ENCODE measurements at regions of chr10 and their contacts with region 1.

Region 1: DNA sequence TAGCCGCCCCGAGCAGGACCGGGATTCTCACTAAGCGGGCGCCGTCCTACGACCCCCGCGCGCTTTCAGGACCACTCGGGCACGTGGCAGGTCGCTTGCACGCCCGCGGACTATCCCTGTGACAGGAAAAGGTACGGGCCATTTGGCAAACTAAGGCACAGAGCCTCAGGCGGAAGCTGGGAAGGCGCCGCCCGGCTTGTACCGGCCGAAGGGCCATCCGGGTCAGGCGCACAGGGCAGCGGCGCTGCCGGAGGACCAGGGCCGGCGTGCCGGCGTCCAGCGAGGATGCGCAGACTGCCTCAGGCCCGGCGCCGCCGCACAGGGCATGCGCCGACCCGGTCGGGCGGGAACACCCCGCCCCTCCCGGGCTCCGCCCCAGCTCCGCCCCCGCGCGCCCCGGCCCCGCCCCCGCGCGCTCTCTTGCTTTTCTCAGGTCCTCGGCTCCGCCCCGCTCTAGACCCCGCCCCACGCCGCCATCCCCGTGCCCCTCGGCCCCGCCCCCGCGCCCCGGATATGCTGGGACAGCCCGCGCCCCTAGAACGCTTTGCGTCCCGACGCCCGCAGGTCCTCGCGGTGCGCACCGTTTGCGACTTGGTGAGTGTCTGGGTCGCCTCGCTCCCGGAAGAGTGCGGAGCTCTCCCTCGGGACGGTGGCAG is at the start of gene MGMT:
- DNase-seq: peak; percentile 97
- ATAC-seq: peak; percentile 99
- H3K4me3 Mint-ChIP-seq: peak within 1 kb of the TSS; percentile 81
- H3K27ac Mint-ChIP-seq: peak within 1 kb of the TSS; percentile 82
- H3K4me1 Mint-ChIP-seq: peaks cover 12% of the 10 kb centered on the region
- H3K27me3 Mint-ChIP-seq: no peaks in the 10 kb centered on the region
- CTCF ChIP-seq: no peak
- total RNA-seq, gene MGMT: 22.5 and 25.8 TPM in 2 replicates

Region 2: GRCh38 chr10:128125944-128126764 is 1340.7 kb before region 1 on chr10 and contains the start of gene MKI67:
- CTCF ChIA-PET with region 1: no interaction called
- POLR2A ChIA-PET with region 1: no interaction called
- intact Hi-C with region 1: loop called (anchors 5 kb)
- DNase-seq: peak; percentile 68
- ATAC-seq: peak; percentile 94
- H3K4me3 Mint-ChIP-seq: peak within 1 kb of the TSS; percentile 86
- H3K27ac Mint-ChIP-seq: peak within 1 kb of the TSS; percentile 87
- H3K4me1 Mint-ChIP-seq: peaks cover 18% of the 10 kb centered on the region
- H3K27me3 Mint-ChIP-seq: peaks cover 22% of the 10 kb centered on the region
- CTCF ChIP-seq: no peak
- total RNA-seq, gene MKI67: 2.2 and 3.5 TPM in 2 replicates

Region 3: GRCh38 chr10:129501652-129502436 is 35.0 kb after region 1 on chr10:
- CTCF ChIA-PET with region 1: no interaction called
- POLR2A ChIA-PET with region 1: no interaction called
- intact Hi-C with region 1: loop called (anchors 5 kb)
- DNase-seq: no peak
- ATAC-seq: peak; percentile 97
- H3K4me3 Mint-ChIP-seq: no peak overlapping the region
- H3K27ac Mint-ChIP-seq: no peak overlapping the region
- H3K4me1 Mint-ChIP-seq: peaks cover 30% of the 10 kb centered on the region
- H3K27me3 Mint-ChIP-seq: no peaks in the 10 kb centered on the region
- CTCF ChIP-seq: no peak

Region 4: DNA sequence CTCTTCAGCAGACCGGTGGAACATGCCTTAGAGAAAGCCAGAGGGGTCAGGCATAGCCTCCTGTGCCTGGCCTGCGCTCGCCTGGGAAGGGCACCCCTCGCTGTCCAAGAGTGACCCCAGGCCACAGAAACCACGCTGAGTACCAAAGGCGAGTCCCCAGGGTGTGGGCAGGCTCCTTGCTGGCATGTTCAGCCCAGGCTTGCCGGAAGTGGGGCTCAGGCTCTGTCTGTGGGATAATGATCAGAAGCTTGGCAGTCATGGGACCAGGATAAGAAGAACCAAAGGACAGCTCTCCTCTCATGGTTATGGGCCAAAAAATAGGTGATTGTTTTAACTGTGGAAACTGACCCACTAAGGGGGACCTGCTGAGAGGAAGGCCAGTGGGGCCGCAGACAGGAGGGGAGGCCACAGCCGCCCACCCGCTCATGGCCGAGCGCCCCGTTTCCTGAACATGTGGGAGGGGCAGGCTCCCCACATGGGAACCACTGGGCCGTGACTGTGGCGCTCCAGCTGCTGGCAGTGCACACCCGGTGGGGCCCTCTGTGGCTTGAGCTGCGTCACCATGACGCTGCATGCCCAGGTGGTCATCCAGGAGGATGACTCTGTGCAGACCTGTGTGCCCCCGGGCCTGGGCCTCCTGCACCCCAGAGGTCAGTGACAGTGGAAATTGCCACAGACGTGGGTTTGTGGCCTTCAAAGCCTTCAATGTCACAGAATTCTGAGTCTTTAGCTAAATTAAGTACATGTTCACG is 85.1 kb after region 1 on chr10:
- CTCF ChIA-PET with region 1: no interaction called
- POLR2A ChIA-PET with region 1: no interaction called
- intact Hi-C with region 1: no loop called
- DNase-seq: peak; percentile 30
- ATAC-seq: peak; percentile 75
- H3K4me3 Mint-ChIP-seq: peak overlapping the region; percentile 6
- H3K27ac Mint-ChIP-seq: peak overlapping the region; percentile 38
- H3K4me1 Mint-ChIP-seq: peaks cover 19% of the 10 kb centered on the region
- H3K27me3 Mint-ChIP-seq: no peaks in the 10 kb centered on the region
- CTCF ChIP-seq: no peak

Region 5: GRCh38 chr10:129605986-129606518 is 139.2 kb after region 1 on chr10:
- CTCF ChIA-PET with region 1: no interaction called
- POLR2A ChIA-PET with region 1: interaction called, 8 read pairs
- intact Hi-C with region 1: loop called (anchors 2 kb)
- DNase-seq: no peak
- ATAC-seq: peak; percentile 74
- H3K4me3 Mint-ChIP-seq: peak overlapping the region; percentile 81
- H3K27ac Mint-ChIP-seq: peak overlapping the region; percentile 85
- H3K4me1 Mint-ChIP-seq: peaks cover 47% of the 10 kb centered on the region
- H3K27me3 Mint-ChIP-seq: no peaks in the 10 kb centered on the region
- CTCF ChIP-seq: no peak

Region 6: DNA sequence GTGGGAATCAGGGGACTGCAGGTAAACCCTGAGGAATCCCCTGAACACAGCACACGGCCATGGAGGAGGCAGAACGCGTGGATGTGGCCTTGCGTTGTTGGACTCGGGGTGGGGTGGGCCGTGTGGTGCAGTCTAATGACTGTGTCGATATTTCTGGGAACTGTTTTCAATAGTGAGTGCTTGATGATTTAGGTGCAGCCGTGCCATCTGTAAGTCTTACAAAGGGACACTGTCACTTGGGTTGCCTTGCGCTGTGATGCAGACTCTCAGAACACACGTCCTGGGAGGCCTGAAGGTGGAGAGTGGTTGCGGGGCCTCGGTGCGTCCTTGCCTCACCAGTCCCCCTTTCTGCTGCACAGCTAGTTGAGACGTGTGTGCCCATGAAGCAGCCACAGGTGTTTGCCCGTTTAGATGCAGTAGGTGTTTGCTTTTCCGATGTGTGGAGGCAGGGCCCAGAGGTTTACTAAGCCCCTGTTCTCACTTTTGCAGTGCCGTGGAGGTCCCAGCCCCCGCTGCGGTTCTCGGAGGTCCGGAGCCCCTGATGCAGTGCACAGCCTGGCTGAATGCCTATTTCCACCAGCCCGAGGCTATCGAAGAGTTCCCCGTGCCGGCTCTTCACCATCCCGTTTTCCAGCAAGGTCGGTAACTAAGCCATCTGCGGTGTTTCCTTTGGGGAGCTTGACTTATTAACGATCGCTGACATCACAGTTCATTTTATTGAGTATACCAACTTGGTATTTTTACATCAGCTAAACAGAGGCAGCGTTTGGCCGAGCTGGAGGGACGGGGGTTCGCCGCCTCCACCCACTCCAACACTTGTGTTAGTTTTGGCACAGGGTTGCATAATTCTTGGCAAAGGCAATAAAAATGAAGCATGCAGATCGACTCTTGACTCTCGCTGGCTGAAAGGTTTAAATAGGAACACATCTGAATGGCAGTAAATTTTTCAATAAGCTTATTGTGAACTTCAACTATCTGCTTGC is 240.9 kb after region 1 on chr10:
- CTCF ChIA-PET with region 1: no interaction called
- POLR2A ChIA-PET with region 1: no interaction called
- intact Hi-C with region 1: no loop called
- DNase-seq: no peak
- ATAC-seq: no peak
- H3K4me3 Mint-ChIP-seq: no peak overlapping the region
- H3K27ac Mint-ChIP-seq: no peak overlapping the region
- H3K4me1 Mint-ChIP-seq: peaks cover 8% of the 10 kb centered on the region
- H3K27me3 Mint-ChIP-seq: no peaks in the 10 kb centered on the region
- CTCF ChIP-seq: no peak

Region 7: DNA sequence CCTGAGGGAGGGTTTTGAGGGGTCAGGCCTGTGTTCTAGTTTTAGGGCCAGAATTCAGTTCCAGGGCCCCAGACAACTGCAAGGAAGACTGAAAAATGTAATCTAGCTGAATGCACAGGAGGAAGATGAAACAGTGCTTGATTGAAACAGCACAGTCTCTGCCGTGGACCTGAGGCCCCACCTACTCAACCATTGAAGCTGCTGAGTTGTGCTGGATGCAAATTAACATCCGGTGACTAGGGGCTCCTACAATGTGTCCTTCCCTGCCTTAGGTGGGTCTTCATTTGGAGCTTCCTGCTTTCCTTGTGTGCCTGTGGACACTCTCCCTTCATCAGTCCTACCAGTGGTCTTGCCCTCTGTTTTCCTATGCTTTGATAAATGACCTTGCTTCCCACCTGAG is 675.0 kb after region 1 on chr10:
- CTCF ChIA-PET with region 1: no interaction called
- POLR2A ChIA-PET with region 1: interaction called, 4 read pairs
- intact Hi-C with region 1: loop called (anchors 2 kb)
- DNase-seq: no peak
- ATAC-seq: peak; percentile 93
- H3K4me3 Mint-ChIP-seq: peak overlapping the region; percentile 53
- H3K27ac Mint-ChIP-seq: peak overlapping the region; percentile 62
- H3K4me1 Mint-ChIP-seq: peaks cover 69% of the 10 kb centered on the region
- H3K27me3 Mint-ChIP-seq: no peaks in the 10 kb centered on the region
- CTCF ChIP-seq: no peak

Measured in activated B cell treated with CpG ODN at 0.5 μM for 24 hours (primary cell).